HEK293T (cell line): ENCODE measurements at regions of chr10 and their contacts with region 1.

Region 1: GRCh38 chr10:71363936-71364335 is 32.8 kb upstream of the CDH23 start:
- DNase-seq: no peak

Region 2: DNA sequence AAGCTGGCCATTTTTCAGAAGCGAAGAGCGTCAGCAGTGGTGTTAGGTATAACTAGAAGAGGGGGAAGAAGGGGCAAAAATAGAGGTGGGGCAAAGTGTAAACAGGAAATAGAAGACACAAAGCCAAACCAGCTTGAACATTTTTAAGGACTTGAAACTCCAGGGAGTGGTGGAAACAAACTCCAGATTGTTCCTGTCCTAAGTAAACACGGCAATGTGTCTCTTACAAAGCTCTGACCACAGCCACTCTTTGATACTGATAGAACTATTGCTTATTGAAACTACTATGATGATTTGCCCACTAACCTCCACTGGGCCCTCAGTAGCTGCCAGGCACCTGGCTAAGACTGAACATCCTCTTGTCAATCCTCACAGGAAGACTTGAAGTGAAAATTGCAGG is 12.0 kb after region 1 on chr10:
- CTCF ChIA-PET with region 1: no interaction called
- POLR2A ChIA-PET with region 1: interaction called, 10 read pairs
- DNase-seq: no peak